ENCODE measurements at regions of chr11 and their contacts with region 1.

Region 1: GRCh38 chr11:61816736-61817455 is at the start of gene FADS1:
- DNase-seq: peak; percentile 93
- H3K4me3 Mint-ChIP-seq: peak within 1 kb of the TSS; percentile 95
- H3K27ac Mint-ChIP-seq: peak within 1 kb of the TSS; percentile 93
- H3K4me1 Mint-ChIP-seq: peaks cover 21% of the 10 kb centered on the region
- H3K27me3 Mint-ChIP-seq: peaks cover 56% of the 10 kb centered on the region

Region 2: GRCh38 chr11:61489833-61490721 is 326.8 kb before region 1 on chr11:
- CTCF ChIA-PET with region 1: no interaction called
- DNase-seq: no peak
- H3K4me3 Mint-ChIP-seq: no peak overlapping the region
- H3K27ac Mint-ChIP-seq: no peak overlapping the region
- H3K4me1 Mint-ChIP-seq: no peaks in the 10 kb centered on the region
- H3K27me3 Mint-ChIP-seq: peaks cover 6% of the 10 kb centered on the region

Region 3: DNA sequence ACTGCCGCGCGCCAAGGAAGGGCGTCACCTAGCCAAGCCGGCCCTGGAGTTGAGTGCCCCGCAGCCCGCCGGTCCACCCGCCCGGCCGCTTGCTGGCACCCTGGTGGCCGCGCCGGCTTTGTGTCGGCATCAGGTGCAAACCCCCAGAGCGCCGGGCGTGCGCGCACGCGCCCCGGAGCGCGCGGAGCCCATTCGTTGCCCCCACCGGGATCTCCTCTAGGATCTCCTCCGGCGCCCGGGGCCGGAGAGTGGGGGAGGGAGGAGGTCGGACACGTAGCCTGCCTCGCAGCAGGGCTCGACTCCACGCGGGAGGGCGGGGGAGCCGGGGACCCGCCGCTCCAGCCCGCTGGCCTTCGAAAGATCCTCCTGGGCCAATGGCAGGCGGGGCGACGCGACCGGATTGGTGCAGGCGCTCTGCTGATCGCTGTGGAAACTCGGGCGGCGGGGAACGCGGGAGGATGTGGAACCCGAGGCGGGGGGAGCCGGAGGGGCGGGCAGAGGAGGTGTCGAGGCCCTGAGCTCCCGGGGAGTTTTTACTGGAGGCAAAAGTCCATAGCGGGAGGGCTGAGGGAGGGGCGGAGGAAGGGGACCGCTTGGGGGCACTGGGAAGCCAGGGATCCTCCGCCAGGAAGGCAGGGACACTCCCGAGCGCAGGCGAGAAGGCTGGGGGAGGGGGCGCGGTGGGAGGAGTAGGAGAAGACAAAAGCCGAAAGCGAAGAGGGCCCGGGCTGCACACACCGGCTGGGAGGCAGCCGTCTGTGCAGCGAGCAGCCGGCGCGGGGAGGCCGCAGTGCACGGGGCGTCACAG is 10.9 kb after region 1 on chr11 and contains the start of gene FADS2:
- CTCF ChIA-PET with region 1: interaction called, 20 read pairs
- DNase-seq: peak; percentile 96
- H3K4me3 Mint-ChIP-seq: peak within 1 kb of the TSS; percentile 89
- H3K27ac Mint-ChIP-seq: peak within 1 kb of the TSS; percentile 93
- H3K4me1 Mint-ChIP-seq: peaks cover 51% of the 10 kb centered on the region
- H3K27me3 Mint-ChIP-seq: peaks cover 46% of the 10 kb centered on the region

Measured in activated naive CD4-positive, alpha-beta T cell treated with anti-CD3 and anti-CD28 coated beads, Interleukin-2, amount 10 ng/mL, durations not matched to agents 7 days and 5 days (primary cell).